ENCODE measurements at regions of chr5 and their contacts with region 1.

Region 1: GRCh38 chr5:149114403-149115312 is 26.6 kb upstream of the ABLIM3 start:
- DNase-seq: peak; percentile 99
- ATAC-seq: peak; percentile 91
- H3K4me3 ChIP-seq: peak overlapping the region; percentile 5; the same call in 1 of the 2 replicates
- H3K27ac ChIP-seq: peak overlapping the region; percentile 53
- H3K4me1 ChIP-seq: peaks cover 55% of the 10 kb centered on the region
- H3K27me3 ChIP-seq: no peaks in the 10 kb centered on the region
- CTCF ChIP-seq: peak; percentile 100

Region 2: GRCh38 chr5:148820461-148821395 is 293.9 kb before region 1 on chr5:
- CTCF ChIA-PET with region 1: interaction called, 13 read pairs
- POLR2A ChIA-PET with region 1: interaction called, 6 read pairs
- intact Hi-C with region 1: loop called (anchors 1 kb)
- DNase-seq: peak; percentile 84
- ATAC-seq: peak; percentile 56
- H3K4me3 ChIP-seq: no peak overlapping the region
- H3K27ac ChIP-seq: no peak overlapping the region
- H3K4me1 ChIP-seq: peaks cover 11% of the 10 kb centered on the region
- H3K27me3 ChIP-seq: no peaks in the 10 kb centered on the region
- CTCF ChIP-seq: peak; percentile 98

Region 3: GRCh38 chr5:148957591-148958202 is 157.0 kb before region 1 on chr5:
- CTCF ChIA-PET with region 1: interaction called, 15 read pairs
- POLR2A ChIA-PET with region 1: interaction called, 7 read pairs
- intact Hi-C with region 1: loop called (anchors 1 kb)
- DNase-seq: peak; percentile 86
- ATAC-seq: no peak
- H3K4me3 ChIP-seq: no peak overlapping the region
- H3K27ac ChIP-seq: no peak overlapping the region
- H3K4me1 ChIP-seq: peaks cover 49% of the 10 kb centered on the region
- H3K27me3 ChIP-seq: no peaks in the 10 kb centered on the region
- CTCF ChIP-seq: peak; percentile 100

Region 4: GRCh38 chr5:149035372-149035790 is 79.3 kb before region 1 on chr5:
- CTCF ChIA-PET with region 1: interaction called, 157 read pairs
- POLR2A ChIA-PET with region 1: interaction called, 4 read pairs
- intact Hi-C with region 1: loop called (anchors 1 kb)
- DNase-seq: peak; percentile 98
- ATAC-seq: peak; percentile 92
- H3K4me3 ChIP-seq: no peak overlapping the region
- H3K27ac ChIP-seq: no peak overlapping the region
- H3K4me1 ChIP-seq: peaks cover 42% of the 10 kb centered on the region
- H3K27me3 ChIP-seq: no peaks in the 10 kb centered on the region
- CTCF ChIP-seq: peak; percentile 100

Region 5: GRCh38 chr5:149074106-149074505 is 40.6 kb before region 1 on chr5:
- CTCF ChIA-PET with region 1: interaction called, 11 read pairs
- POLR2A ChIA-PET with region 1: interaction called, 7 read pairs
- intact Hi-C with region 1: loop called (anchors 1 kb)
- DNase-seq: peak; percentile 98
- ATAC-seq: peak; percentile 44
- H3K4me3 ChIP-seq: no peak overlapping the region
- H3K27ac ChIP-seq: peak overlapping the region; percentile 82
- H3K4me1 ChIP-seq: peaks cover 53% of the 10 kb centered on the region
- H3K27me3 ChIP-seq: no peaks in the 10 kb centered on the region
- CTCF ChIP-seq: no peak